Adrenal gland (tissue), 19 donors: ENCODE measurements at regions of chr16 and their contacts with region 1.

Region 1: GRCh38 chr16:19601083-19601976 is 45.8 kb downstream of the VPS35L start:
- DNase-seq: peak in 3 of 7 donors; percentile 25 to 37 (median 33)
- H3K4me3 ChIP-seq: no peak overlapping the region
- H3K27ac ChIP-seq: no peak overlapping the region
- H3K4me1 ChIP-seq: no peaks in the 10 kb centered on the region
- H3K27me3 ChIP-seq: no peaks in the 10 kb centered on the region
- CTCF ChIP-seq: peak; percentile 52 to 75 (median 60)
- POLR2A ChIP-seq: no peak

Region 2: DNA sequence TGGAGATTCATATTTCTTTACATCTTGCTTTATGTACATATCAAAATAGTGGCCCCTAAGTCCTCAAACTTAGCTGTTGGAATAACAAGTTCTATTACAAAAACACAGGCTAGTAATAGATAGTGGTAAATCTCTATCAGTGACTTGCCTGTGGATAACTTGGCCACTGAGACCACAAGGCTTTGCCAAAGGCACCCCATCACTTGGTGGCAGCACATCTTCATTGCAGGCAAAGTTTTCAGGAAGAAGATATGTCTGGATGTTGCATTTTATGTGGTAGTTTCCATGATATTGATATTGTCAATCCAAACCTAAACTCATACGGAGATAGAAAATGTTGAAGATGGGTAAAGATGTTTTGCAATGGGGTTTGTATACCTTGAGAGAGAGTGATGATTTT is 58.2 kb after region 1 on chr16:
- intact Hi-C with region 1: no loop called
- DNase-seq: no peak
- H3K4me3 ChIP-seq: no peak overlapping the region
- H3K27ac ChIP-seq: no peak overlapping the region
- H3K4me1 ChIP-seq: no peaks in the 10 kb centered on the region
- H3K27me3 ChIP-seq: no peaks in the 10 kb centered on the region
- CTCF ChIP-seq: no peak
- POLR2A ChIP-seq: no peak

Region 3: GRCh38 chr16:19886073-19886941 is 285.0 kb after region 1 on chr16:
- intact Hi-C with region 1: loop called (anchors 5 kb)
- DNase-seq: peak; percentile 70 to 92 (median 79)
- H3K4me3 ChIP-seq: peak overlapping the region in 1 of 4 donors; percentile 89
- H3K27ac ChIP-seq: no peak overlapping the region
- H3K4me1 ChIP-seq: peaks cover 5 to 19% of the 10 kb centered on the region in 2 donors
- H3K27me3 ChIP-seq: no peaks in the 10 kb centered on the region
- CTCF ChIP-seq: peak; percentile 99 to 100 (median 100)
- POLR2A ChIP-seq: peak in 1 of 2 donors; percentile 32